Activated naive CD4-positive, alpha-beta T cell treated with anti-CD3 and anti-CD28 coated beads for 36 hours (primary cell): ENCODE measurements at regions of chr1 and their contacts with region 1.

Region 1: GRCh38 chr1:6438047-6438525 is 13.5 kb downstream of the ESPN start:
- DNase-seq: peak; percentile 81
- H3K4me3 Mint-ChIP-seq: no peak overlapping the region
- H3K27ac Mint-ChIP-seq: no peak overlapping the region
- H3K4me1 Mint-ChIP-seq: peaks cover 3% of the 10 kb centered on the region
- H3K27me3 Mint-ChIP-seq: peaks cover 27% of the 10 kb centered on the region

Region 2: GRCh38 chr1:6423321-6423999 is 14.6 kb before region 1 on chr1:
- CTCF ChIA-PET with region 1: interaction called, 39 read pairs
- intact Hi-C with region 1: loop called (anchors 1 kb)
- DNase-seq: peak; percentile 87
- H3K4me3 Mint-ChIP-seq: peak overlapping the region; percentile 18
- H3K27ac Mint-ChIP-seq: no peak overlapping the region
- H3K4me1 Mint-ChIP-seq: peaks cover 10% of the 10 kb centered on the region
- H3K27me3 Mint-ChIP-seq: peaks cover 39% of the 10 kb centered on the region